Activated CD4-positive, alpha-beta T cell treated with anti-CD3 and anti-CD28 coated beads, Interleukin-2, amount 10 ng/mL, durations not matched to agents 24 days and 14 days (primary cell): ENCODE measurements at regions of chr4 and their contacts with region 1.

Region 1: DNA sequence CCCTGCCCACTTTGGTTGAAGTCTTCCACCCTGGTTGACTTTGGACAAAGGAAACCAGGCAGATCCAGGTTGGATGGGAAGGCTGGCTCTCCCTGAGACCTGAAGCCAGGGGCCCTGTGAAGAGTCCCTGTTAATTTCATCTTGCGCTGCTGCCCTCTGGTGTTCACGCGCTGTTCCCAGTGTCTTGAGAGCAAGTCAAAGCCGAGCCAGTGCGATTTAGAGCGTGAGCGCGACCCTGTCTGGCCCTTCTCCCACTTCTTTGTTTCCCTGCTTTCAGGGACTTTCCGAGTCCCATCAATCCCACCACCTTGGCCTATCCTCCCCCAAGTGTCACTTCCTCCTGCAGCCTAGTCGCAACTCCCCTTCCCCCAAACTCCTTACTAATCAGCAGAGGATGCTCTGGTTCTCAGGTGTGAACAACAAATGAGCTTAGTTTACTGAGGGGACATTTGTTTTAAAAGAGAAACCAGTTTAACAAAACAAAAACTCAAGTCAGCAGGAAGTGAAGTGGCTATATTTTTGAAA is 25.8 kb upstream of the CHRNA9 start:
- DNase-seq: peak; percentile 96
- H3K4me3 Mint-ChIP-seq: peak overlapping the region; percentile 73
- H3K27ac Mint-ChIP-seq: peak overlapping the region; percentile 98
- H3K4me1 Mint-ChIP-seq: peaks cover 81% of the 10 kb centered on the region
- H3K27me3 Mint-ChIP-seq: no peaks in the 10 kb centered on the region

Region 2: DNA sequence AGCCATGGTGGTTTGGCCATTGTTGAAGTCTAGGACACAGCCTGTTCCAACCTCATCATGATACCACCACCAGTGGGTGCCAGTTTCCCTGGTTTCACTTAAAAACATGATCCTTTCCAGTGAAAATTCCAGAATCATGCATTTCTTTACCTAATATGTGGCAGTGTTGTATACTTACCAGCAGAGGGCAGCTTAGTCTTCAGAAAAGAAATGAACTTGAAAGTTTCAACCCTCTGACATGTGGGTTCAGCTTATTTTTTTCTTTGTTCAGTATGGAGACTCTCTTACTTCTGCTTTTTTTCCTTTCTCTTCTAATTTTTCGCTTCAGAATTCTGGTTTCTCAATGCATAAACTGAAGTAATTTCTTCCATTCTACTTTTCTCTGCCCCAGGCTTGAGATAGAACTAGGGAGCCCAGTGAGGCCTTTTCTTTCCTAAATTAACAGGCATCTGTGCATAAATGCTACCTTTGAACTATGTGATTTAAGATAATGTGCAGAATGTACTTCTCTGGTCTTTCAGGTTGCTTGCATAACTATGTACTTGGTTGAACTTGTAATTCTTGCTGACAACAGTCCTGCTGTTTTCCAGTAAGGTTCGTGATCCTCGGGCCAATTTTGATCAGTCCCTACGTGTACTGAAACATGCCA is 839.8 kb before region 1 on chr4:
- intact Hi-C with region 1: loop called (anchors 10 kb)
- DNase-seq: peak; percentile 72
- H3K4me3 Mint-ChIP-seq: no peak overlapping the region
- H3K27ac Mint-ChIP-seq: peak overlapping the region; percentile 72
- H3K4me1 Mint-ChIP-seq: peaks cover 5% of the 10 kb centered on the region
- H3K27me3 Mint-ChIP-seq: no peaks in the 10 kb centered on the region

Region 3: GRCh38 chr4:40149960-40150385 is 159.3 kb before region 1 on chr4:
- intact Hi-C with region 1: loop called (anchors 1 kb)
- DNase-seq: peak; percentile 92
- H3K4me3 Mint-ChIP-seq: no peak overlapping the region
- H3K27ac Mint-ChIP-seq: peak overlapping the region; percentile 22
- H3K4me1 Mint-ChIP-seq: peaks cover 6% of the 10 kb centered on the region
- H3K27me3 Mint-ChIP-seq: no peaks in the 10 kb centered on the region

Region 4: GRCh38 chr4:40199999-40200874 is 109.1 kb before region 1 on chr4:
- intact Hi-C with region 1: loop called (anchors 1 kb)
- DNase-seq: peak; percentile 93
- H3K4me3 Mint-ChIP-seq: peak overlapping the region; percentile 93
- H3K27ac Mint-ChIP-seq: peak overlapping the region; percentile 94
- H3K4me1 Mint-ChIP-seq: peaks cover 44% of the 10 kb centered on the region
- H3K27me3 Mint-ChIP-seq: no peaks in the 10 kb centered on the region

Region 5: GRCh38 chr4:40255393-40256281 is 53.7 kb before region 1 on chr4:
- intact Hi-C with region 1: loop called (anchors 1 kb)
- DNase-seq: no peak
- H3K4me3 Mint-ChIP-seq: peak overlapping the region; percentile 53
- H3K27ac Mint-ChIP-seq: peak overlapping the region; percentile 80
- H3K4me1 Mint-ChIP-seq: peaks cover 55% of the 10 kb centered on the region
- H3K27me3 Mint-ChIP-seq: no peaks in the 10 kb centered on the region

Region 6: DNA sequence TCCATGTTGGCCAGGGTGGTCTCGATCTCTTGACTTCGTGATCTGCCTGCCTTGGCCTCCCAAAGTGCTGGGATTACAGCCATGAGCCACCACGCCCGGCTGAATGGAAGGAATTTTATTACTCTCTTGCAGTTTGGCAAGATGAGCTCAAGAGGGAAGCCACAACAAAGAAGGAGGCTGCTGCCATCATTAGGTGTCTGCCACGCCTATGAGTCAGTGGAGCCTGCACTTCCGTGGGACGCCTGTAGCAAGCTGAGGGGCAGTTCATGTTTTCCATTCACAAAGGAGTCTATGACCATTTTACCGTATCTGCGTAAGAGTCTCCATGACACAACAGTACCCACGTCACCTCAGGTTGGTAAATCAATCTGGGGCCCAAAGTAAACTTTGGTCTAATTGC is 25.3 kb before region 1 on chr4:
- intact Hi-C with region 1: loop called (anchors 1 kb)
- DNase-seq: peak; percentile 91
- H3K4me3 Mint-ChIP-seq: peak overlapping the region; percentile 66
- H3K27ac Mint-ChIP-seq: peak overlapping the region; percentile 95
- H3K4me1 Mint-ChIP-seq: peaks cover 50% of the 10 kb centered on the region
- H3K27me3 Mint-ChIP-seq: no peaks in the 10 kb centered on the region

Region 7: GRCh38 chr4:40289366-40290188 is 19.7 kb before region 1 on chr4:
- intact Hi-C with region 1: loop called (anchors 1 kb)
- DNase-seq: peak; percentile 77
- H3K4me3 Mint-ChIP-seq: peak overlapping the region; percentile 60
- H3K27ac Mint-ChIP-seq: peak overlapping the region; percentile 85
- H3K4me1 Mint-ChIP-seq: peaks cover 50% of the 10 kb centered on the region
- H3K27me3 Mint-ChIP-seq: no peaks in the 10 kb centered on the region